ENCODE measurements at regions of chr5 and their contacts with region 1.

Region 1: GRCh38 chr5:178551059-178551458 is 39.1 kb downstream of the COL23A1 start:
- DNase-seq: no peak
- ATAC-seq: no peak
- H3K4me3 Mint-ChIP-seq: no peak overlapping the region
- H3K27ac Mint-ChIP-seq: no peak overlapping the region
- H3K4me1 Mint-ChIP-seq: no peaks in the 10 kb centered on the region
- H3K27me3 Mint-ChIP-seq: no peaks in the 10 kb centered on the region
- CTCF ChIP-seq: peak; percentile 43

Region 2: DNA sequence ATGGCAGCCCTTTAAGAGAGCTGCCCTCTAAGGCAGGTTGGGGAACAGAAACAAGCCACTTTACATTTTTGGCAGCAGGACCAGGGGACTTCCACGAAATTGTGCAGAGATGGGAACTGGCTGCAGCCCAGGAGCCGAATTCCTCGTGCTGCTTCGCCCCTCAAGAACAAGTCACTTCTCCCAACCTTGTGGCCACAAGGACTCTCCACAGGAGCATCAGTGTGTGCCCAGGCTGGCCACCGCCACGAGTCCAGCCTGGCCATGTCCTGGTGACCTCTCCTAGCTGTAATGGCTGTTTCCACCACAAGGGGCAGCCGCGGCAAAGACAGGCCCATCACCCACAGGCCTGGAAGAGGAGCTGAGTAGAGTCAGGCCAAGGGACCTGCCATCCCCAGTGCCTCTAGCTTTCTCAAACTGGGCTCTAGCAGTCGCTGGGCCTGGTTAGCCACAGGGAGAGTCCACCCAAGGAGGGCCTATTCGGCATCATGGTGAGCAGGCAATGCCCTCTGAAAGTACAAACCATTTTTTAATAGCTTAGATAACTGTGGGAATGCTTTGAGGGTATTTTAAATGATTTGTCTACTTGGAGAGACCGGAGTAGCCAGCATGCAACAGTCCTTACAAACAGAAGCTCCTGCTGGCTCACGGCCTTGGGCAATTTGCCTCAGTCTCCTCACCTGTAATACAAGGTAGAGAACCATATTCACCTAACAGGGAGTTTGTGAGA is 89.9 kb before region 1 on chr5:
- CTCF ChIA-PET with region 1: interaction called, 12 read pairs
- POLR2A ChIA-PET with region 1: no interaction called
- intact Hi-C with region 1: no loop called
- DNase-seq: peak; percentile 77
- ATAC-seq: peak; percentile 91
- H3K4me3 Mint-ChIP-seq: no peak overlapping the region
- H3K27ac Mint-ChIP-seq: no peak overlapping the region
- H3K4me1 Mint-ChIP-seq: no peaks in the 10 kb centered on the region
- H3K27me3 Mint-ChIP-seq: no peaks in the 10 kb centered on the region
- CTCF ChIP-seq: peak; percentile 84

Measured in activated CD8-positive, alpha-beta T cell treated with anti-CD3 and anti-CD28 coated beads for 36 hours (primary cell).